Activated CD4-positive, alpha-beta T cell treated with anti-CD3 and anti-CD28 coated beads for 36 hours (primary cell): ENCODE measurements at regions of chr5 and their contacts with region 1.

Region 1: DNA sequence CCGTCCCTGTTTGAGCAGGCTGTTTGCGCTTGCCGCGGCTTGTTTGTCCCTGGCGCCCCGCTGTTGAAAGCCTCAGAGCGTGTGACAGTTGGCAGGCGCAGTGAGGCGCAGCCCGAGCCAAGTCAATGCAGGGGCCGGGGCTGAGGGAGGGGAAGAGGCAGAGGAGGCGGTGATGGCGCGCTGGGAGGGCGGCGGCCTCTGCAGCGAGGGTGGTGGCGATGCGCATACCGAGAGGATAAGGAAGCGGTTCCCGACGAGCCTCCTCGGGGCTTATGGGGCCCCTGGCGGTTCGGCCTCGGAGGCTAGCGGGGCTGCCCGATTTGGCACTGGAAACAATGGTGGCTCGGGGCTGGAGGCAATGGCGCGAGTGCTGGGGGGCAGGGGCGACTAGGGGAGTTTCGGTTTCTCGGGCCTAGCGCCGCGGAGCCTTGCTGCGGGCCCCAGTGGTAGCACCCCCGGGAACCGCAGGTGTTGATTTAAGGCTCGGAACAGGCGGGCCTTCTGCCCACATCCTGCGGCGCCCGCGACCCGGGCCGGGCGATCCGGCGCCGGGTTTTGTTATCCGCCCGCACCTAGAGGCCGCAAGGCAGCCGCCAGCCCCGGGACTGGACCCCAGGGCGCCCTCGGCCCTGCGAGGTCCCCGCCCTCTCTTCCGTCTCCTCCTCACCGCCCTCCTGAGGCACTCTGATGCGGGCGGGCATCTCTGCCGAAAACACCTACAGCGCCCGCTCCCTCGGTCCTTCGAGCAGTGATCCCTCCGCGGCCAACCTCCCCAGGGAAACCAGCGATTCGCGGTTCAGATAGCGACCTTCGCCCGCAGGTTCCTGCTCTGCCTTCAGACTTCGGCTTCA is 947 bp upstream of the LNPEP start:
- DNase-seq: peak; percentile 96
- ATAC-seq: peak; percentile 74
- H3K4me3 Mint-ChIP-seq: peak overlapping the region; percentile 96
- H3K27ac Mint-ChIP-seq: peak overlapping the region; percentile 98
- H3K4me1 Mint-ChIP-seq: peaks cover 60% of the 10 kb centered on the region
- H3K27me3 Mint-ChIP-seq: no peaks in the 10 kb centered on the region

Region 2: GRCh38 chr5:95961617-95962474 is 973.1 kb before region 1 on chr5 and contains the start of gene ELL2:
- CTCF ChIA-PET with region 1: no interaction called
- POLR2A ChIA-PET with region 1: no interaction called
- intact Hi-C with region 1: loop called in 1 of 2 experiments (anchors 2 kb)
- DNase-seq: peak; percentile 99
- ATAC-seq: peak; percentile 89
- H3K4me3 Mint-ChIP-seq: peak within 1 kb of the TSS; percentile 97
- H3K27ac Mint-ChIP-seq: peak within 1 kb of the TSS; percentile 96
- H3K4me1 Mint-ChIP-seq: peaks cover 51% of the 10 kb centered on the region
- H3K27me3 Mint-ChIP-seq: peaks cover 3% of the 10 kb centered on the region
- total RNA-seq, gene ELL2: 87.6 to 131 TPM

Region 3: GRCh38 chr5:96807075-96807654 is 127.8 kb before region 1 on chr5:
- CTCF ChIA-PET with region 1: no interaction called
- POLR2A ChIA-PET with region 1: interaction called, 3 read pairs
- intact Hi-C with region 1: loop called (anchors 1 to 2 kb)
- DNase-seq: peak; percentile 65
- ATAC-seq: peak; percentile 5
- H3K4me3 Mint-ChIP-seq: peak overlapping the region; percentile 89
- H3K27ac Mint-ChIP-seq: peak overlapping the region; percentile 94
- H3K4me1 Mint-ChIP-seq: peaks cover 55% of the 10 kb centered on the region
- H3K27me3 Mint-ChIP-seq: no peaks in the 10 kb centered on the region

Region 4: GRCh38 chr5:96896806-96897205 is 38.1 kb before region 1 on chr5:
- CTCF ChIA-PET with region 1: interaction called, 3 read pairs
- POLR2A ChIA-PET with region 1: interaction called, 4 read pairs
- intact Hi-C with region 1: loop called (anchors 1 kb)
- DNase-seq: peak; percentile 59
- ATAC-seq: peak; percentile 57
- H3K4me3 Mint-ChIP-seq: peak overlapping the region; percentile 77
- H3K27ac Mint-ChIP-seq: peak overlapping the region; percentile 97
- H3K4me1 Mint-ChIP-seq: peaks cover 52% of the 10 kb centered on the region
- H3K27me3 Mint-ChIP-seq: no peaks in the 10 kb centered on the region

Region 5: DNA sequence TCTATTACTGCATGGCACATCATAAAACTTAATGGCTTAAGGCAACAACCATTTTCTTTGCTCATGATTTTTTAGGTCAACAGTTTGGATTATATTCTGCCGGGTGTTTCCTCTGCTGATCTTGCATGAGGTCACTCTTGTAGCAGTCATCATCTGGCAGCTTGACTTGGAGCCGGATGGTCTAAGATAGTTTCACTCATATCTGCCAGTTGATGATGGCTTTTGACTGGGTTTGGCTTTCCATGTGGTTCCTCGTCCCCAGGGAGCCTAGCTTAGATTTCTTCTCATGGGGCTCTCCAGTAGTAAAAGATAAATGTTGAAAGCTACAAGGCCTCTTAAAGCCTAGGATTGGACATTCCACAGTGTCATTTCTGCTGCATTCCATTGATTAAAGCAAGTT is 28.3 kb after region 1 on chr5:
- CTCF ChIA-PET with region 1: interaction called, 8 read pairs
- POLR2A ChIA-PET with region 1: interaction called, 3 read pairs
- intact Hi-C with region 1: loop called (anchors 1 kb)
- DNase-seq: peak; percentile 46
- ATAC-seq: peak; percentile 76
- H3K4me3 Mint-ChIP-seq: peak overlapping the region; percentile 64
- H3K27ac Mint-ChIP-seq: peak overlapping the region; percentile 97
- H3K4me1 Mint-ChIP-seq: peaks cover 75% of the 10 kb centered on the region
- H3K27me3 Mint-ChIP-seq: no peaks in the 10 kb centered on the region

Region 6: GRCh38 chr5:97162045-97162444 is 227.1 kb after region 1 on chr5:
- CTCF ChIA-PET with region 1: interaction called, 5 read pairs
- POLR2A ChIA-PET with region 1: no interaction called
- intact Hi-C with region 1: loop called (anchors 2 to 5 kb)
- DNase-seq: peak; percentile 70
- ATAC-seq: peak; percentile 49
- H3K4me3 Mint-ChIP-seq: no peak overlapping the region
- H3K27ac Mint-ChIP-seq: no peak overlapping the region
- H3K4me1 Mint-ChIP-seq: peaks cover 16% of the 10 kb centered on the region
- H3K27me3 Mint-ChIP-seq: no peaks in the 10 kb centered on the region

Region 7: GRCh38 chr5:98928873-98929696 is 1994.2 kb after region 1 on chr5 and contains the start of gene CHD1:
- CTCF ChIA-PET with region 1: no interaction called
- POLR2A ChIA-PET with region 1: no interaction called
- intact Hi-C with region 1: loop called in 1 of 2 experiments (anchors 1 kb)
- DNase-seq: peak; percentile 97
- ATAC-seq: peak; percentile 57
- H3K4me3 Mint-ChIP-seq: peak within 1 kb of the TSS; percentile 93
- H3K27ac Mint-ChIP-seq: peak within 1 kb of the TSS; percentile 99
- H3K4me1 Mint-ChIP-seq: peaks cover 56% of the 10 kb centered on the region
- H3K27me3 Mint-ChIP-seq: no peaks in the 10 kb centered on the region
- total RNA-seq, gene CHD1: 50.8 to 75.5 TPM